PC-3 (cell line): ENCODE measurements at regions of chr12 and their contacts with region 1.

Region 1: GRCh38 chr12:85866986-85867776 is 6.9 kb upstream of the NTS start:
- DNase-seq: peak; percentile 72
- ATAC-seq: peak; percentile 79
- H3K4me3 ChIP-seq: no peak overlapping the region
- H3K27ac ChIP-seq: no peak overlapping the region
- H3K4me1 ChIP-seq: no peaks in the 10 kb centered on the region
- H3K27me3 ChIP-seq: no peaks in the 10 kb centered on the region
- CTCF ChIP-seq: peak; percentile 90

Region 2: GRCh38 chr12:85575120-85576096 is 291.8 kb before region 1 on chr12:
- CTCF ChIA-PET with region 1: interaction called, 21 read pairs
- POLR2A ChIA-PET with region 1: no interaction called
- intact Hi-C with region 1: loop called (anchors 1 kb)
- DNase-seq: peak; percentile 81
- ATAC-seq: peak; percentile 95
- H3K4me3 ChIP-seq: no peak overlapping the region
- H3K27ac ChIP-seq: no peak overlapping the region
- H3K4me1 ChIP-seq: peaks cover 3% of the 10 kb centered on the region; the same call in 1 of the 2 replicates
- H3K27me3 ChIP-seq: no peaks in the 10 kb centered on the region
- CTCF ChIP-seq: peak; percentile 92

Region 3: GRCh38 chr12:85804663-85805062 is 62.5 kb before region 1 on chr12:
- CTCF ChIA-PET with region 1: interaction called, 3 read pairs
- POLR2A ChIA-PET with region 1: no interaction called
- intact Hi-C with region 1: loop called (anchors 5 kb)
- DNase-seq: no peak
- ATAC-seq: no peak
- H3K4me3 ChIP-seq: no peak overlapping the region
- H3K27ac ChIP-seq: no peak overlapping the region
- H3K4me1 ChIP-seq: no peaks in the 10 kb centered on the region
- H3K27me3 ChIP-seq: no peaks in the 10 kb centered on the region
- CTCF ChIP-seq: no peak

Region 4: GRCh38 chr12:86283620-86284019 is 416.4 kb after region 1 on chr12:
- CTCF ChIA-PET with region 1: no interaction called
- POLR2A ChIA-PET with region 1: no interaction called
- intact Hi-C with region 1: no loop called
- DNase-seq: no peak
- ATAC-seq: no peak
- H3K4me3 ChIP-seq: no peak overlapping the region
- H3K27ac ChIP-seq: no peak overlapping the region
- H3K4me1 ChIP-seq: no peaks in the 10 kb centered on the region
- H3K27me3 ChIP-seq: no peaks in the 10 kb centered on the region
- CTCF ChIP-seq: no peak